Caco-2 (cell line): ENCODE measurements at regions of chr11 and their contacts with region 1.

Region 1: DNA sequence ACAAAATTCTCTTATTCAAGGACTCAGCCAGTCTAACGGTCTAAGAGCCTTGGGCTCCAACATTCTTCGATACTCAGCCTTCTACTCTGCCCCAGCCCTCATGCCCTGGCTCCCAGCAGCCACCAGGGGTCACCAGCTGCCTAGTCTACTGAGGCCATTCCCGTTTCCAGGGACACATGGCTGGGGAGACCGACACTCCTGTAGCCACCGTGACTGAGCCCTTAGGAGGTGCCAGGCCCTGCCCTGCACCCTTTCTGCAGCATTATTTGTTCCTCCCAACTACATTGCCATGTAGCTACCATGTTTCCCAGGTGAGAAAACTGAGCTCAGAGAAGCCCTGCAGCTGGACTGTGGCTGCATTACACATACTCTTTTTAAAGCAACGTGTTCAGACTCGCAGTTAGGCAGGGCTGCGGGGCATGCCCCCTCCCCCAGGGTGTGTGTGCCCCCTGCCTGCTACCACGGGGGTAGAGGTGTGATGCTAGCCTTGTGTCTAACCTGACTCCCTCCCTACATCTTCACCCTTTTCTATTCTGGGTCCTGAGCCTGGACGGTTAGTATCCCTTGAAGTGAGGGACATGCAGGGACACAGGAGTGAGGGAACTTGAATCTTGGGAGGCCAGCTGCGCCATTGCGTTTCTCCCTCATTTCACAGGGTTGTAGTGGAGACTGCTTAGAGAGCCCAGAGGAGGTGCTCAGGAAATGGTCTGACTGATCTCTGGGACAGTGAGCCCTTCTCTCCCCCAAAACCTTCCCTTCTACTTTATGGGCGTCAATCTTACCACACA is 17.5 kb downstream of the ATG16L2 start:
- DNase-seq: peak; percentile 89 to 93
- H3K4me3 ChIP-seq: no peak overlapping the region
- H3K4me3 Mint-ChIP-seq: no peak overlapping the region
- H3K27ac Mint-ChIP-seq: peak overlapping the region; percentile 58
- H3K4me1 ChIP-seq: peaks cover 10% of the 10 kb centered on the region
- H3K4me1 Mint-ChIP-seq: peaks cover 24% of the 10 kb centered on the region
- H3K27me3 ChIP-seq: no peaks in the 10 kb centered on the region
- H3K27me3 Mint-ChIP-seq: no peaks in the 10 kb centered on the region
- CTCF ChIP-seq: peak; percentile 98 to 99

Region 2: DNA sequence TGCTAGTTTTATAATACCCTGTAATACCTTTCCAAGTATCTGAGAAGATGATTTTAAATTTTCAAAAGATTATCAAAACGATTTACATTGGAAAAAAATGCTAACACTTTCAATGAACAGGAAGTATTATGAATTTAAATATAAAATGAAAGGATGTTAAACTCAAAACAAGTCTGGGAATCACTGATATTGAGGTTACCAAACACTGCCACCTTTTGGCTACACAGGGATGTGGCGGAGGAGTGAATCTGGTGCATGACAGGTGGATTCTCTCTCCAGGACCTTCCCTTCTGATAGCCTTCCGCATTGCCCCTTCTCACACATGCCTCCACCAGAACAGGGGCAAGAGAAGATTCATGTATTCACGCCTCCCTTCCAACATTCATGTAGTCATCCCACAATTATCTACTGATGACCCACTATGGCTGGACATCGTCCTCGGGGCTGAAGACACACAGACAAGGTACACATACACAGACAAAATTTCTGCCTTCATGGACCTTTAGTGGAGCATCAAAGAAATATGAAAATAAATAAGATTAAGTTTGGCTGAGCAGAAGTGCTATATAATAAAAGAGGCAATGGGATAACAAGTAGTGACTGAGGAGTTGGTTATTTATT is 17.2 kb after region 1 on chr11:
- CTCF ChIA-PET with region 1: interaction called, 4 read pairs
- POLR2A ChIA-PET with region 1: no interaction called
- intact Hi-C with region 1: loop called (anchors 1 kb)
- DNase-seq: peak in 1 of 2 experiments; percentile 72
- H3K4me3 ChIP-seq: no peak overlapping the region
- H3K4me3 Mint-ChIP-seq: no peak overlapping the region
- H3K27ac Mint-ChIP-seq: no peak overlapping the region
- H3K4me1 ChIP-seq: no peaks in the 10 kb centered on the region
- H3K4me1 Mint-ChIP-seq: no peaks in the 10 kb centered on the region
- H3K27me3 ChIP-seq: no peaks in the 10 kb centered on the region
- H3K27me3 Mint-ChIP-seq: no peaks in the 10 kb centered on the region
- CTCF ChIP-seq: peak; percentile 90 to 93

Region 3: DNA sequence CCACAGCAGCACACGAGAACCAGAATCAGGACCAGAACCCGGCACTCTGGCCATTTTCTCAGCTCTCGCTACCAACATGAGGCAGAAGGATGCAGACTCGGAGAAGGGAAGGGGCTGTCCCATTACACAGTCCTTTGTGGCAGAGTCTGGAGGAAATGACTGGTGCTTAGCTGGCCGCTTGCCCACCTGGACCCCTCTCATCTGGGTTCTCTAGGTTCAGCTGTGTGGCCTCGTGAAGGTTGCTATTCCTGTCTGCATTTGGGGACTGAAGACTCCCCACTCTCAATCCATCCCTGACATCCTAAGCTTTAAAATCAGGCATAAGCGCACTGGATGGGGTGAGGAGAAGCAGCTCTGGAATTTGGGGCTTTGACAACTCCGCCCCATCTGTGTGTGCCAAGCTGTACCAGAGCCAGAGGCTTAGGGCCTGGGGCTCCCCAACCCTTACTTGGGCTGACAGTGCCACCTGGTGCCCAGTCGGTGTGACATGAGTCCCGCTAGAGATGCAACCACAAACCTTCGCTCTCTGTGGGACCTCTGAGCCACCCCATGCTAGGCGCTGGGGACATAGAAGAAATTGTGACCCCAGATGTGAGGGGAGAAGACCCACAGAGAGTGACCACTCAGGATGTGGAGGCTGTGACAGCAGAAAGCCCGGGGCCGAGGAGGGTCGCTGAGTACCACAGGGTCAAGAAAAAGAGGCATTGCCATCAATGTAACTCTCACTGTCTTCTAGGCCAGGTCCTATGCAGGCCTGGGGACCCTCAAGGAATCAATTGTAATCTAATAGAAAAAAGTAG is 346.3 kb after region 1 on chr11:
- CTCF ChIA-PET with region 1: interaction called, 65 read pairs
- POLR2A ChIA-PET with region 1: no interaction called
- intact Hi-C with region 1: loop called (anchors 1 kb)
- DNase-seq: peak; percentile 85 to 88
- H3K4me3 ChIP-seq: no peak overlapping the region
- H3K4me3 Mint-ChIP-seq: no peak overlapping the region
- H3K27ac Mint-ChIP-seq: no peak overlapping the region
- H3K4me1 ChIP-seq: peaks cover 30% of the 10 kb centered on the region
- H3K4me1 Mint-ChIP-seq: peaks cover 19% of the 10 kb centered on the region
- H3K27me3 ChIP-seq: no peaks in the 10 kb centered on the region
- H3K27me3 Mint-ChIP-seq: no peaks in the 10 kb centered on the region
- CTCF ChIP-seq: peak; percentile 93 to 96